ENCODE measurements at regions of chr1 and their contacts with region 1.

Region 1: DNA sequence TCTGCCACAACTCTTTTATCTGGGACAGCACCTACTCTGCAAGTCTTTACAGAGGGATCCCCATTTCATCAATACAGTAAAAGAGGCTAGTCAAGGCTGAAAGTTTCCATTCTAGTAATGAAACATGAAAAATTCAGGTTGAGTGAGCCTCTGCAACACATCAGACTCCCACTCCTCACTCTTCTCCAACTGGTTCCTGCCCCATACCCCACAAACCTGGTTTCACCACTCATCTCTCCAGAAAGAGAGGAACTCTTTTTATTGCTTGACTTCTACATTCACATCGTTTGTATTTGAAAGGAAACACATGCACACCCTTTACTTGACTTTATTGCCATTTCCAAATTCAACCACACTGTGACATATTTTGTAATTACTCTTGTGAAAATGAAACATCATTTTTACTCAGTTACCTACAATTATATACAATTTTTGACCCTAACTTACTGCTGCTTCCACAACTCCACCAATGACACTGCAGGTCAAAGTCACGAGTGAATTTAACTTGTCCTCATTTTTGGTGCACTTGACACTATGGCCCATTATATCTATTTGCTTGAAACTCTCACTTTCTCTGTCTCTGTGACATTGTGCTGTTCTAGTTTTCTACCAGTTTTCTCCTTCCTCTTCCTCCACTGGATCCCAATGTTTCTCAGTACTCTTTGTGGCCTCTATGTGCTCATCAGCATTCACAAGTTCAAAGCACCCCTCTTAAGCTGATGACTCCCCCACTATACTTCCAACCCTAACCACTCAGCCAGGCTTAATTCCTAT is 8.0 kb downstream of the STX6 start:
- DNase-seq: no peak
- H3K4me3 Mint-ChIP-seq: no peak overlapping the region
- H3K27ac Mint-ChIP-seq: no peak overlapping the region
- H3K4me1 Mint-ChIP-seq: peaks cover 44% of the 10 kb centered on the region
- H3K27me3 Mint-ChIP-seq: no peaks in the 10 kb centered on the region

Region 2: GRCh38 chr1:181397845-181398244 is 383.2 kb after region 1 on chr1:
- intact Hi-C with region 1: loop called (anchors 2 kb)
- DNase-seq: peak; percentile 12
- H3K4me3 Mint-ChIP-seq: peak overlapping the region; percentile 58
- H3K27ac Mint-ChIP-seq: peak overlapping the region; percentile 42
- H3K4me1 Mint-ChIP-seq: peaks cover 33% of the 10 kb centered on the region
- H3K27me3 Mint-ChIP-seq: no peaks in the 10 kb centered on the region